Tibial artery (tissue), 4 donors: ENCODE measurements at regions of chr5 and their contacts with region 1.

Region 1: GRCh38 chr5:62214701-62215100 is 91.3 kb upstream of the KIF2A start:
- DNase-seq: no peak
- H3K4me3 ChIP-seq: no peak overlapping the region
- H3K27ac ChIP-seq: no peak overlapping the region
- H3K4me1 ChIP-seq: no peaks in the 10 kb centered on the region
- H3K27me3 ChIP-seq: peaks cover 0 to 10% of the 10 kb centered on the region in 2 donors
- CTCF ChIP-seq: no peak

Region 2: DNA sequence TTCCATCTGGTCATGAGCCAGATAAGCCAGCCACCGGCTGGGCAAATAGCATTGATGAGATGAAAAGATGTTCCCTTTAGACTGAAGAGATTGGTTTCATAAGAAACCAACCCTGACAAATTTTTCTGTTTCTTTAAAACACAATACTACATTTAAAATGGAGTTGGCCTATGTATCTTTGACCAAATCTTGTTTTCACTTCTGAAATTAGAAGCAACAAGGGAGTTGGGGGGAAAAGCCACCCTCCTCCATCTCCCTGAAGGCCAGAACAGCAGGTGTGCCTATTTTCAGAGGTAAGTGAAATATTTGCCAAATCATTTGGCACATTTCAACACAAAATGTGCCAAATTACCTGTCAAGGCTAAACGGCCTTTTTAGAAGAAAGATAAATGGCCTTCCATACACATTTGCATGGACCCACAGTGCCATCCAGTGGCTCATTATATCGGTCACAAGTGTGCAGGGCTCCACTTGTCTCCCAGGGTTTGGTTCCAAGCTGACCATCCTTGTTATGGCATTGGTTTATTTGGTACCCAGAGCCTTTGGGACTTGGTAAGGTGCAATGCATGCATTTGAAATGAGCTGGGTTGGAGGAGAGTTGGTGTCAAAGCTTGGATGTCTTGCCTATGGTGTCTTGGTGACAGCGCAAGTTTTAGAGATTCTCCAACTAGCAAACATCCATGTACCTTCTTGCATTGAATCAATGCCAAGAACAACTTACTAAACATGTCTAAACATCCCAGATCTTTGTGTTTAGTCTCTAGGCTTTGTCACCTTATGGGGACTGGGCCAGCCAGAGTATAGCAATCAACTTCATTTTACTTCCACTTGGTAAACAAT is 280.7 kb before region 1 on chr5:
- intact Hi-C with region 1: no loop called
- DNase-seq: no peak
- H3K4me3 ChIP-seq: no peak overlapping the region
- H3K27ac ChIP-seq: no peak overlapping the region
- H3K4me1 ChIP-seq: no peaks in the 10 kb centered on the region
- H3K27me3 ChIP-seq: no peaks in the 10 kb centered on the region
- CTCF ChIP-seq: peak; percentile 25 to 36

Region 3: DNA sequence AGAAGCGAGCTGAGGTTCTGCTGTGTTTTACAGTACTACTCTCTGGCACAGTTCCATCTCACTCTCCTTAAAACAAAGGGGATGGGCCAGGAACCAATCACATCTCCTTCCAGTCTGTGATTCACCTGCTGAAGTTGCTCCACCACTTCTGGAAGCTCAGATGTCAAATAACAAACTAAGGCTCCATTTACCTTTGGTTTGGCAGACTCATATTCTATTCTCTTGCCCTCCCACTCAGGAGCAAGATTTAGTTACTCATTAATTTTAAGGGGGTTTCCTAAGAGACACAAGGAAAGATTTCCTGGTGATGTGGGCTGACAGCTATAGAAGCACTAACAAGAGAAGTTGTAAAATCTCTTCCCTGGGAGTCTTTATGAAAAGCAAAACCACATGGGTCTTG is 53.5 kb after region 1 on chr5:
- intact Hi-C with region 1: no loop called
- DNase-seq: no peak
- H3K4me3 ChIP-seq: no peak overlapping the region
- H3K27ac ChIP-seq: no peak overlapping the region
- H3K4me1 ChIP-seq: no peaks in the 10 kb centered on the region
- H3K27me3 ChIP-seq: no peaks in the 10 kb centered on the region
- CTCF ChIP-seq: no peak

Region 4: GRCh38 chr5:62340392-62340791 is 125.7 kb after region 1 on chr5:
- intact Hi-C with region 1: no loop called
- DNase-seq: no peak
- H3K4me3 ChIP-seq: no peak overlapping the region
- H3K27ac ChIP-seq: no peak overlapping the region
- H3K4me1 ChIP-seq: no peaks in the 10 kb centered on the region
- H3K27me3 ChIP-seq: no peaks in the 10 kb centered on the region
- CTCF ChIP-seq: no peak

Region 5: DNA sequence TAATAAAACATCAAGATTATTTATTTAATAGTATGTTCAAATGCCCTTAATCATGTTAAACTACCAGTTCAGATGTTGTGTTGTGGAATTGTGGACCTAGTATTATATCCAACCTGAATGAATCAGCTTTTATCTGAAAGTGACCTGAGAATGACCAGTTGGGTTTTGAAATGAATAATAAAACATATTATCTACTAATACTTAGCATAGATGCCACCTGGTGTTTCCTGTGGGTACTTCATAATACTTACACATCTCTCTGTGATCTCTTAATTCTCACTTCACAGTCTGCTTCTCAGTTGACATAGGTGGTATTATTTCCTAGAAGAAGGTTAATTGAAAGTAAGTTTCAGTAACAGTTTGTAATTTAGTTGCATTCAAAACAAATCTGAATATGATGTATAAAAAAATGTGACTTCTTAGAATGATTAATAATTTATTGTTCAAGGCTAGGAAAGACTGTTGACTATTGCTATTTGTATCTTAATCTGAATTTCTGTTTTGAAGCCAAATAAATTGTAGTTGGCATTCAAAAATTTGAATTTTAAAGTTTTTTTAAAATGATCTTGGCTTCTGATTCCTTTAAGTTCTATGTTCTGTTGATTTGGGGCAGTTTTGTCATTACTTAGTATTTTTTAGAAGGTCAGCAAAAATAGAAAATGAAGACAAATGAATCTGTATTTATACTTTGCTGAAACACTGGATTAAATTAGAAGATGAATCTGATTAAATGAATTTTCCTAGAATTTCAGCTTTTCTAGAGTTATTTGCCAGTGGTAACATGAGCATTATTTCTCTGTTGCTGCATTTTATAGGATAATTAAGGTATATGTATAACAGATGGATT is 139.6 kb after region 1 on chr5:
- intact Hi-C with region 1: loop called (anchors 10 kb)
- DNase-seq: no peak
- H3K4me3 ChIP-seq: no peak overlapping the region
- H3K27ac ChIP-seq: no peak overlapping the region
- H3K4me1 ChIP-seq: no peaks in the 10 kb centered on the region
- H3K27me3 ChIP-seq: no peaks in the 10 kb centered on the region
- CTCF ChIP-seq: peak; percentile 66 to 73